Activated CD4-positive, alpha-beta memory T cell treated with anti-CD3 and anti-CD28 coated beads, Interleukin-2, amount 10 ng/mL, durations not matched to agents 7 days and 5 days (primary cell): ENCODE measurements at regions of chr6 and their contacts with region 1.

Region 1: GRCh38 chr6:31806465-31807272 is at the start of gene LSM2:
- DNase-seq: peak; percentile 98
- H3K4me3 Mint-ChIP-seq: peak within 1 kb of the TSS; percentile 91
- H3K27ac Mint-ChIP-seq: peak within 1 kb of the TSS; percentile 91
- H3K4me1 Mint-ChIP-seq: peaks cover 43% of the 10 kb centered on the region
- H3K27me3 Mint-ChIP-seq: no peaks in the 10 kb centered on the region
- total RNA-seq, gene LSM2: 100 to 108 TPM

Region 2: DNA sequence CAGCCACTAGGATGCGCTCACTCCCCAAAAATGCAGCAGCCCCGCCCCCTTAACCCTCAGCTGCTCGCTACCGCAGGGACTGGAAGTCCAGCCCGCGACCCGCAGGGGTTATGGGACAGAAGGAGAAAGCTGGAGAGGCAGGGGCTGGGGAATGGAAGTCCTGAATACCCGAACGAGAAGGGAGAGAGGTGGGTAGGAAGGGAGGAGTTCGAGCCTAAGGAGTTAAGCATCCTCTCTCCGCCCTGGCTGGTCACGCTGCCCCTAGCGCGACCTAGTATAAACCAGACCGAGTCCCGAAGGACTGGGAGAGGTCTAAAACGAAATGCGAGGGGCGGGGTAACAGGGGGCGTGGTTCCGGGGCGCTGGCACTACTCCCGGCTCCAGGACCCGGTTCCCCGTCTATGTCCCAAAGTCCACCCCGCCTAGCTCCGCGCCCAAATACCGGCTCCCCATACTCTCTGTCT is 77.1 kb before region 1 on chr6:
- CTCF ChIA-PET with region 1: interaction called, 10 read pairs
- POLR2A ChIA-PET with region 1: interaction called, 98 read pairs
- DNase-seq: peak; percentile 82
- H3K4me3 Mint-ChIP-seq: peak overlapping the region; percentile 88
- H3K27ac Mint-ChIP-seq: peak overlapping the region; percentile 82
- H3K4me1 Mint-ChIP-seq: peaks cover 79% of the 10 kb centered on the region
- H3K27me3 Mint-ChIP-seq: no peaks in the 10 kb centered on the region

Region 3: GRCh38 chr6:31795616-31796298 is 10.9 kb before region 1 on chr6 and contains the start of gene VARS1:
- CTCF ChIA-PET with region 1: interaction called, 23 read pairs
- POLR2A ChIA-PET with region 1: interaction called, 51 read pairs
- DNase-seq: peak; percentile 86
- H3K4me3 Mint-ChIP-seq: peak within 1 kb of the TSS; percentile 89
- H3K27ac Mint-ChIP-seq: peak within 1 kb of the TSS; percentile 97
- H3K4me1 Mint-ChIP-seq: peaks cover 58% of the 10 kb centered on the region
- H3K27me3 Mint-ChIP-seq: no peaks in the 10 kb centered on the region
- total RNA-seq, gene VARS1: 84.1 to 88.4 TPM

Region 4: GRCh38 chr6:31822036-31822821 is 15.6 kb after region 1 on chr6:
- CTCF ChIA-PET with region 1: interaction called, 15 read pairs
- POLR2A ChIA-PET with region 1: interaction called, 29 read pairs
- DNase-seq: peak; percentile 65
- H3K4me3 Mint-ChIP-seq: peak overlapping the region; percentile 92
- H3K27ac Mint-ChIP-seq: peak overlapping the region; percentile 94
- H3K4me1 Mint-ChIP-seq: peaks cover 67% of the 10 kb centered on the region
- H3K27me3 Mint-ChIP-seq: no peaks in the 10 kb centered on the region

Region 5: DNA sequence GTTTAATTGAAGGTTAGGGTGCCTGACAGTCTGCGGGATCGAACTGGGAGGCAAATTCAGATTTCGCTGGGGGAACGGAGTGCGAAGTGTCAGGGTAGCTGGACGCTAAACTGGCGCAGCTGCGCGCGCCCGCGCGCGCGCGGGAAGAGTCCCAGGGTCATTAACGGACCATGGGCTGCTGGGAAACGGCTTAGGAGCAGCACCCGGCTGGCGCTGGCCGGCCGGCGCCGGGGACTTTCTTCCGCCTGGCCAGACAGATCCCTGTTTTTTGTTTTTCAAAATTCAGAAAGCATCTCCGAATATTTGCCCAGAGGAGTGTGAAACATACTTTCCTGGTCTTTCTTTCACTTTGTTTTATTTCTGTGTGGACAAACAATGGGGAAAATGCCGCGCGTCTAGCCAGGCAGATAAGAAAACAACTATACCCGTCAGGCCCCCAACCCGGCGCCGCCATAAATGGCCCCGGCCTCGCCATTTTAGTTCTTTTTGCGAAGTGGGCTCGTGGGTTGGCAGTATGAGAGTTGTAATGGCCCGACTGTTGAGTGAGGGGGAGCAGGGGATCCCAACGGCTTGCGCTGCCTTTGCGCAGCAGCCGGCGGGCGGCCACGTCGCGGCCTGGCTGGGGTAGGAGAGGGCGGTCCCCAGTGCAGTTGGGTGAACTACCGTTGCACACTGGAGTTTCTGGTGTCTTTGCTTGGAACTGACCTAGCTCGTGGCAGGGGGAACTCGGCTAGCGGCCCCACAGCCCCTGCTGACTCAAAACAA is 27.9 kb after region 1 on chr6:
- CTCF ChIA-PET with region 1: interaction called, 7 read pairs
- POLR2A ChIA-PET with region 1: interaction called, 18 read pairs
- DNase-seq: peak; percentile 79
- H3K4me3 Mint-ChIP-seq: peak overlapping the region; percentile 81
- H3K27ac Mint-ChIP-seq: peak overlapping the region; percentile 91
- H3K4me1 Mint-ChIP-seq: peaks cover 56% of the 10 kb centered on the region
- H3K27me3 Mint-ChIP-seq: no peaks in the 10 kb centered on the region